Aorta (tissue), 5 donors: ENCODE measurements at regions of chr7 and their contacts with region 1.

Region 1: DNA sequence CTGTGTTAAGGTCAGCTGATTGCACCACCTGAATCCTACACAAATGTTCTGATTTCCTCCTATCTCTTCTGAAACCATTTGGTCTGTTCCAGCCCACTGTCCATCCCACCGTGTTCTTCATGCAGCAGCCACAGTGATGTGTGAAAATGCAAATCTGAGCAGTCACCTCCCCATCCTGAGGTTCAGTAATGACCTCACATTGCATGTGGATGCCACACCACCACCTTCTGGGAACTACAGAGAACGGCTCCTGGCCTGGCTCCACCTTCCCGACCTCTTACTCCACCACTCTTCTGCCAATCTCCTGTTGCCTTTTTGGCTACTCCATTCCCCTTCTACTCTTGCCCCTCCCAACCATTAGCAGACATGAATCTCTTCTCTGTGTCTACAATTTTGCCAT is 244.4 kb downstream of the TNS3 start:
- DNase-seq: peak in 1 of 2 donors; percentile 51
- ATAC-seq: no peak
- H3K4me3 ChIP-seq: no peak overlapping the region
- H3K27ac ChIP-seq: peak overlapping the region in 1 of 2 donors; percentile 12
- H3K4me1 ChIP-seq: peaks cover 0 to 4% of the 10 kb centered on the region in 2 donors
- H3K27me3 ChIP-seq: no peaks in the 10 kb centered on the region

Region 2: DNA sequence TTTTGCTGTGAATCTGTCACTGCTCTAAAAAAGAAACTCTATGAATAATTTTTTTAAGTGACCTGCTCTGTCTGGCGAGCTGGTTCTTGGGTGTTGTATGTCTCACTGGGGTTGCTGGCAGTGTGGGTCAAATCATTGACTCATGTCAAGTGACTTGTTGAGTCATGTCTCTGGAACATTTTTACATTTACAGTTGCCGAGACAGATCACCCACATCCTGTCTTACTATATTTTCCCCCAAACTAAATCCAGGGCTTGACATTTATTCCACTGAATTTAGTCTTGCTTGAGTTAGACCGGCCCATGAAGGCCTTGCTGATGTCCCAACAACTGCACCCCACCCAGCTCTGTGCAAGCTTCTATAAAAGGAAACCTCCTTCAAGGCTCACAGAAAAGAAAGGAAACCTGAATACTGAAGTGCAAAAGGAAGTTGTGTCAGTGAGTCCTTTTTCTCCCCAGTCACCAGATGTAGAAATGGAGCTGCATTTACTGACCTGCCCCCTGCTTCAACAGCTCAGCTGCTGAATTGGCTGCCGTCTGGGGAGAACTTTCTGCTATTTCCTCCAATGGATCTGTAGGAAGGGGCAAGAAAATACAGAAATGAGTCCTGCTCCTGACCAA is 46.0 kb before region 1 on chr7:
- intact Hi-C with region 1: loop called in 1 of 2 experiments (anchors 5 kb)
- DNase-seq: peak in 1 of 2 donors; percentile 73
- ATAC-seq: peak; percentile 72
- H3K4me3 ChIP-seq: no peak overlapping the region
- H3K27ac ChIP-seq: peak overlapping the region in 1 of 2 donors; percentile 47
- H3K4me1 ChIP-seq: peaks cover 2 to 9% of the 10 kb centered on the region in 2 donors
- H3K27me3 ChIP-seq: no peaks in the 10 kb centered on the region

Region 3: DNA sequence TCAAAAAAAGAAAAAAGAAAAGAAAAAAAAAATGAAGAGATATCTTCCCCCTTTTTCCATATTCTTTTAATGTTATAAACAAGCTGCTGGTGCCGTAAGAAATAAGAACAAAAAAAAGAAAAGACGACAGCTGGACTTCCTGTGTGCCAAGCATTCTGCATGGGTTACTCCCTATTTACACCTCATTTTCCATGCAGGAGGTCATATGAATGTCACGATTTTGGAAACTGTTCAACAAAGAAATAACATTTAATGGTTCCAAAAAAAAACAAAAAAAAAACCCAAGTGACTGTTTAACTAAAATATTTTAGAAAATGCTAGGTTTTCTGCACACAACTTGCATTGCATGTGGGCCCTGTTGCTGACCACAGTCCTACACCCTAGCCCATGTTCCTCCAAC is 85.1 kb after region 1 on chr7:
- intact Hi-C with region 1: loop called in 1 of 2 experiments (anchors 5 kb)
- DNase-seq: no peak
- ATAC-seq: no peak
- H3K4me3 ChIP-seq: no peak overlapping the region
- H3K27ac ChIP-seq: peak overlapping the region in 1 of 2 donors; percentile 23
- H3K4me1 ChIP-seq: no peaks in the 10 kb centered on the region
- H3K27me3 ChIP-seq: no peaks in the 10 kb centered on the region